ENCODE measurements at regions of chr4 and their contacts with region 1.

Region 1: DNA sequence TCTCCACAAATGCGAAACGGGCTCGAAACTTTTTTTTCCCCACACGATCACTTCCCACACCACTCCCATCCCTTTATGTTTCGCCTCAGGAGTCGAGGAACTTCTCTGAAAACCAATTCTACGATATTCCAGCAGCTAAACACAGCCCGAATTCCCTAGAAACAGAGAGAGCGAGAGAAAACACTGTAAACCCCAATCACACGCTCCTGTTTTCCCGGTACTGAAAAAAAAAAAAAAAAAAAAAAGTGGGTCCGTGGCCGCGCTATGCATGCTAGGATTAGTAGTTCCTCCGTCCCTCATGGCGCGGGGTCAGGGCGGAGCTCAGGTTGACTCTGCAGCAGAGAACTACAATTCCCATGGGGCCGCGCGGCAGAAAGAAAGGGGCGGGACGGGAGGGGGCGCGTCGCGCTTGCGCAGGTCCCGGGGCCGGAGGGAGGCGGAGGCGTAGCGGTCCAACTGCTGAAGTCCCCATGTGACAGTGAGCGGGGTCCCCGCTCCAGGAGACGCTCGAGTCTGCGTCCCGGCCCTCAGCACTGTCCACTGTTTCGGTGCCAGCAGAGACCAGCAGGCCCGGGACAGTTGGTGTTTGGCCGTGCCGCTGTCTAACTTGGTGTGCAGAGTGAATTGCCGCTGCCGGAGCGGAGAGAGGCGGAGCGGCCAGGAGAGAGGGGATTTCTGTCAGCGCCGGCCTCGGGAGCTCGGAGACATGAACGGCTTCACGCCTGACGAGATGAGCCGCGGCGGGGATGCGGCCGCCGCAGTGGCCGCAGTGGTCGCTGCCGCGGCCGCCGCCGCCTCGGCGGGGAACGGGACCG is at the start of gene SAP30:
- DNase-seq: peak; percentile 99
- total RNA-seq, gene SAP30: 20.1 TPM

Region 2: DNA sequence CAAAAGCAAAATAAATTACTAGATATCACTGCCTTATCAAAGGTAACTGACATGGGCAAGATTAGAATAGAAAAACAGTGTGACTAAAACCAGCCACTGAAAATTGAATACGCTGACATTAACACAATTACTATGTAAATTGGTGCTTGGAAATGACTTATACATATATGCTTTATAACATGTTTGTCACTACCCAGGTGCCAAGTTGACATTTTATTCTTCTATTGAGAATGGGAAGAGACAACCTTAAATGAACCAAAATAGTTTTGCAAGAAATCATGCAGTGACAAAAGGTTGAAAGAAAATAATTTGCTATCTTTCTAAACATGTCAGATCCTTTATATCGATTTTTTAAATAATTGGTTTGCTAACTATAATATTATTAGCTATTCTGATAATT is 1047.4 kb before region 1 on chr4:
- intact Hi-C with region 1: no loop called
- DNase-seq: no peak

Region 3: DNA sequence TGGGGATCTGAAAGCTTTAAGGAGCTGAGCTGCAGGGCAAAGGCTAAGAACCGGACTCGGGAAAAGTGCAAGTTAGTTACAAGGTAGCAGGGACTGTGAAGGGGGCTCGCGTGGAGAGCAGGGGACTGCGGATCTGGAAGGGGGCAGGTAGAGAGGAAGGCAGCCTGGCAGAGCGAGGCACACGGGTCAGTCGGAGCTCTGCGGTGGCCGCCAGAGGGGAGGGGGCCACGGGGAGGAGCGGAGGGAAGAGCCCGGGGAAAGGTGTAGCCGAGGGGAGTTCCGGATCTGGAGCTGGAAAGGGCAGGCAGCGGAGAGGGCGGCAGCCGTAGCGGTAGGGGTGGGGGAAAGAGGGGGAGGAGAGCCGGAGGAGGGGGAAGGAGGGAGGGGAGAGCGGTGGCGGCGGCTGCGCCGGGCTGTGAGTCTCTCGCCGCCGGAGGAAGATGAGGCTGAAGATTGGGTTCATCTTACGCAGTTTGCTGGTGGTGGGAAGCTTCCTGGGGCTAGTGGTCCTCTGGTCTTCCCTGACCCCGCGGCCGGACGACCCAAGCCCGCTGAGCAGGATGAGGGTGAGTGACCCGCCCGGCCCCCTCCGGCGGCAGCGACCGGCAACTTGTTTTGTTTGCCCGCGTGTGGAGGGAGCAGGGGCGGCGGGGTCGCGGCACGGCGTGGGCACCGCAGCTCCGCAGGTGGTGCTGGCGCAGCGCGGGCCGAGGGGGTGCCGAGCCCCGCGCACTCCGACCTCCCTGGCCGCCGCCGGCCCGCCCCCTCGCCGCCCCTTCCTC is 202.1 kb before region 1 on chr4 and contains the start of gene GALNT7:
- intact Hi-C with region 1: loop called (anchors 2 kb)
- DNase-seq: peak; percentile 87
- total RNA-seq, gene GALNT7: 7.2 TPM

Region 4: GRCh38 chr4:173334085-173334772 is 36.5 kb before region 1 on chr4 and contains the start of gene HMGB2:
- intact Hi-C with region 1: loop called (anchors 1 kb)
- DNase-seq: peak; percentile 100
- total RNA-seq, gene HMGB2: 41.8 TPM